GM12878 (cell line): ENCODE measurements at regions of chr9 and their contacts with region 1.

Region 1: GRCh38 chr9:19456996-19457692 is 48.3 kb downstream of the ACER2 start:
- DNase-seq: peak; percentile 46
- ATAC-seq: peak; percentile 93
- H3K4me3 ChIP-seq: peak overlapping the region; percentile 47; the same call in 1 of the 2 replicates
- H3K27ac ChIP-seq: no peak overlapping the region
- H3K4me1 ChIP-seq: peaks cover 6% of the 10 kb centered on the region
- H3K27me3 ChIP-seq: no peaks in the 10 kb centered on the region
- CTCF ChIP-seq: peak; percentile 86 to 93 (median 92)
- EP300 ChIP-seq: no peak
- POLR2A ChIP-seq: no peak
- RAD21 ChIP-seq: peak; percentile 90

Region 2: GRCh38 chr9:19048966-19049916 is 407.9 kb before region 1 on chr9 and contains the start of gene RRAGA:
- CTCF ChIA-PET with region 1: interaction called, 28 read pairs
- POLR2A ChIA-PET with region 1: interaction called, 12 read pairs
- RAD21 ChIA-PET with region 1: interaction called, 15 read pairs
- SMC1A ChIA-PET with region 1: interaction called, 7 read pairs
- in situ Hi-C with region 1: loop called (anchors 5 kb)
- intact Hi-C with region 1: loop called (anchors 2 kb)
- DNase-seq: peak; percentile 90
- ATAC-seq: peak; percentile 93
- H3K4me3 ChIP-seq: peak within 1 kb of the TSS; percentile 88
- H3K27ac ChIP-seq: peak within 1 kb of the TSS; percentile 82
- H3K4me1 ChIP-seq: peaks cover 5% of the 10 kb centered on the region
- H3K27me3 ChIP-seq: no peaks in the 10 kb centered on the region
- CTCF ChIP-seq: peak; percentile 74 to 89 (median 79)
- EP300 ChIP-seq: peak; percentile 28 to 54; a peak in 1 of 4 replicates
- POLR2A ChIP-seq: peak; percentile 95
- RAD21 ChIP-seq: peak; percentile 36; the same call in 1 of the 2 replicates
- polyA plus RNA-seq, gene RRAGA: 10.1 to 19.3 TPM

Region 3: GRCh38 chr9:19102631-19103345 is 354.4 kb before region 1 on chr9 and contains the start of gene HAUS6:
- CTCF ChIA-PET with region 1: interaction called, 3 read pairs
- POLR2A ChIA-PET with region 1: no interaction called
- RAD21 ChIA-PET with region 1: no interaction called
- SMC1A ChIA-PET with region 1: no interaction called
- in situ Hi-C with region 1: loop called (anchors 10 kb)
- intact Hi-C with region 1: loop called (anchors 2 kb)
- DNase-seq: peak; percentile 89
- ATAC-seq: peak; percentile 98
- H3K4me3 ChIP-seq: peak within 1 kb of the TSS; percentile 80
- H3K27ac ChIP-seq: peak within 1 kb of the TSS; percentile 72
- H3K4me1 ChIP-seq: peaks cover 9% of the 10 kb centered on the region; the same call in 1 of the 2 replicates
- H3K27me3 ChIP-seq: no peaks in the 10 kb centered on the region
- CTCF ChIP-seq: peak in 2 of 3 experiments; percentile 10 to 44; a peak in 1 of 6 replicates
- EP300 ChIP-seq: no peak
- POLR2A ChIP-seq: peak; percentile 80
- RAD21 ChIP-seq: no peak
- polyA plus RNA-seq, gene HAUS6: 7.1 to 8.4 TPM

Region 4: GRCh38 chr9:19371942-19372341 is 85.2 kb before region 1 on chr9:
- CTCF ChIA-PET with region 1: interaction called, 31 read pairs
- POLR2A ChIA-PET with region 1: interaction called, 7 read pairs
- RAD21 ChIA-PET with region 1: interaction called, 5 read pairs
- SMC1A ChIA-PET with region 1: interaction called, 7 read pairs
- in situ Hi-C with region 1: no loop called
- intact Hi-C with region 1: no loop called
- DNase-seq: no peak
- ATAC-seq: no peak
- H3K4me3 ChIP-seq: no peak overlapping the region
- H3K27ac ChIP-seq: no peak overlapping the region
- H3K4me1 ChIP-seq: no peaks in the 10 kb centered on the region
- H3K27me3 ChIP-seq: no peaks in the 10 kb centered on the region
- CTCF ChIP-seq: no peak
- EP300 ChIP-seq: no peak
- POLR2A ChIP-seq: no peak
- RAD21 ChIP-seq: no peak

Region 5: DNA sequence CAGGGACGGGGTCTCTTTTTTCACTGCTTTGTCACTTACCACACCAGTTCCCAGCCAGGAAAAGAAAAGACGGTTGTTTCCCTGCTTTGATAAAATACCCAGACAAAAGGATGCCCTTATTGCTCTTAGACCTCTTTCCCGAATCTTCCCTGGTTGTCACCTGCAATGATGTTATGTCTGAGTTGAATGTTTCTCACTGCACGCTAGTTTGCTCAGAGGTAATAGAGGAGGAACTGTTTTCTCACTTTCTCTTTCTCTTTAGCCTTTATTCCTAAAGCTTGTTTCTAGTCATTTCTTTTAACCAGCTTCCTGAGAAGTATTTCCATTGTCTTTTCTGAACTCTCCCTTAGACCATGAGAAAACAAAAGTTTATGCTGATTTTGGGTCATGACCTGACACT is 15.4 kb before region 1 on chr9:
- CTCF ChIA-PET with region 1: interaction called, 37 read pairs
- POLR2A ChIA-PET with region 1: interaction called, 9 read pairs
- RAD21 ChIA-PET with region 1: interaction called, 17 read pairs
- SMC1A ChIA-PET with region 1: interaction called, 16 read pairs
- in situ Hi-C with region 1: no loop called
- intact Hi-C with region 1: no loop called
- DNase-seq: peak; percentile 48
- ATAC-seq: peak; percentile 90
- H3K4me3 ChIP-seq: peak overlapping the region; percentile 56; the same call in 1 of the 2 replicates
- H3K27ac ChIP-seq: peak overlapping the region; percentile 21; the same call in 1 of the 2 replicates
- H3K4me1 ChIP-seq: peaks cover 9% of the 10 kb centered on the region
- H3K27me3 ChIP-seq: no peaks in the 10 kb centered on the region
- CTCF ChIP-seq: no peak
- EP300 ChIP-seq: no peak
- POLR2A ChIP-seq: no peak
- RAD21 ChIP-seq: no peak

Region 6: GRCh38 chr9:19689328-19690101 is 232.4 kb after region 1 on chr9:
- CTCF ChIA-PET with region 1: no interaction called
- POLR2A ChIA-PET with region 1: no interaction called
- RAD21 ChIA-PET with region 1: no interaction called
- SMC1A ChIA-PET with region 1: no interaction called
- in situ Hi-C with region 1: no loop called
- intact Hi-C with region 1: no loop called
- DNase-seq: no peak
- ATAC-seq: no peak
- H3K4me3 ChIP-seq: no peak overlapping the region
- H3K27ac ChIP-seq: no peak overlapping the region
- H3K4me1 ChIP-seq: no peaks in the 10 kb centered on the region
- H3K27me3 ChIP-seq: no peaks in the 10 kb centered on the region; a peak in 1 of 4 replicates
- CTCF ChIP-seq: no peak
- EP300 ChIP-seq: no peak
- POLR2A ChIP-seq: no peak
- RAD21 ChIP-seq: no peak